IMR-90 (cell line): ENCODE measurements at regions of chr10 and their contacts with region 1.

Region 1: DNA sequence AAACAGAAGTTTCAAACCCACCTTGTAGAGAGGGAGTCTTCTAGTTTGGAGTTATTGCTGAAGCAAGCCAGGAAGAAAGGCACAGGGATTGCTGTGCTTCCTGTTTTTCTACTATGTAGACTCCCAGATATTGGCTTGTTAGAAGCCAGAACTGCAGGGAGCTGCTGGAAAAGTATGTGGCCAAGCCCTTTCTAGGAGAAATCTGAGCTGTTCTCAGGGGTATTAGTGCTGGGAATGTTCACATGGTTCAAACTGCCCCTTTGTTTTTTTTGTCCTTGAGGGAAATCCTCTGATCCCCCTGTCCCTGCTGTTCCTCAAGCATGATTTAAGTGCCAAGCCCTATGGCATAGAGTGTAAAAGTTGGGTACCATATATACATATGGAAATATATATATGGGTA is 184.0 kb downstream of the CCDC7 start:
- DNase-seq: no peak
- ATAC-seq: no peak
- H3K4me3 ChIP-seq: no peak overlapping the region
- H3K27ac ChIP-seq: no peak overlapping the region
- H3K4me1 ChIP-seq: no peaks in the 10 kb centered on the region
- H3K27me3 ChIP-seq: no peaks in the 10 kb centered on the region
- CTCF ChIP-seq: no peak
- POLR2A ChIP-seq: no peak
- RAD21 ChIP-seq: no peak

Region 2: GRCh38 chr10:31875608-31876007 is 754.3 kb before region 1 on chr10:
- CTCF ChIA-PET with region 1: no interaction called
- POLR2A ChIA-PET with region 1: no interaction called
- dilution Hi-C with region 1: no loop called
- in situ Hi-C with region 1: no loop called
- intact Hi-C with region 1: no loop called
- DNase-seq: no peak
- ATAC-seq: no peak
- H3K4me3 ChIP-seq: no peak overlapping the region
- H3K27ac ChIP-seq: no peak overlapping the region
- H3K4me1 ChIP-seq: peaks cover 4% of the 10 kb centered on the region; the same call in 1 of the 2 replicates
- H3K27me3 ChIP-seq: no peaks in the 10 kb centered on the region
- CTCF ChIP-seq: no peak
- POLR2A ChIP-seq: no peak
- RAD21 ChIP-seq: no peak

Region 3: GRCh38 chr10:32582946-32583345 is 47.0 kb before region 1 on chr10:
- CTCF ChIA-PET with region 1: no interaction called
- POLR2A ChIA-PET with region 1: no interaction called
- dilution Hi-C with region 1: no loop called
- in situ Hi-C with region 1: no loop called
- intact Hi-C with region 1: loop called (anchors 1 kb)
- DNase-seq: no peak
- ATAC-seq: no peak
- H3K4me3 ChIP-seq: no peak overlapping the region
- H3K27ac ChIP-seq: no peak overlapping the region
- H3K4me1 ChIP-seq: no peaks in the 10 kb centered on the region
- H3K27me3 ChIP-seq: no peaks in the 10 kb centered on the region
- CTCF ChIP-seq: no peak
- POLR2A ChIP-seq: no peak
- RAD21 ChIP-seq: no peak